ENCODE measurements at regions of chr5 and their contacts with region 1.

Region 1: DNA sequence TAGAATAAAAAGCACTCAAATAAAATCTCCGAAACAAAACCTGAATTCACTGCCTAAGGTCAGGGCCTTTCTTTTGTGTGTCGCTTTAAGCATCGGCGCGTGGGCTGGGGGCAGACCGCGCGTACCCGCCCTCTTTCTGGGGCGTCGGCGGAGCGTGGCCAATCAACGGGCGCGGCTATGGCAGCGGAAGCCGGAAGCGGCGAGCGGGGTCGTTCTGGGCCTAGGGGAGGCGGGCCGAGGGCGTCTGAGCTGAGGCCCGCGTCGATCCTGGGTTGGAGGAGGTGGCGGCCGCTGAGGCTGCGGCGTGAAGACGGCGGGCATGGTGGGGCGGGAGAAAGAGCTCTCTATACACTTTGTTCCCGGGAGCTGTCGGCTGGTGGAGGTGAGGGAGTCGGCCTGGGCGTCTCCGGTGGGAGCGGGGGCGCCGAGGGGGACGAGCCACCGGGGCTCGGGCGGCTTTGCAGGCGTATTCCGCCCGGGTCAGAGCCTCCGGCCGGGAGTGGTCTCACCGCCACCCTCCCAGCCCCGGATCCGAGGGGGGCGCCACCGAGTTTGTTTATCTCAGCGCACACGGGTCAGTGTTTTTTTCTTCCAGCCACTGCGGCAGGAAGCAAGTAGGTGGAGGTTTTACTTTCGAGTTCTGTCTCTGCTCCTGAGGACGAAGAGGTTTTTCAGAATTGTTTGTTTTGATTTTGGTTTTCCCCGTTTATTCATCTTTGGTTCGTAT is at the start of gene MAT2B:
- DNase-seq: peak; percentile 86
- ATAC-seq: peak; percentile 94
- H3K4me3 ChIP-seq: peak within 1 kb of the TSS; percentile 61 to 76
- H3K27ac ChIP-seq: peak within 1 kb of the TSS; percentile 71
- H3K4me1 ChIP-seq: peaks cover 6 to 27% of the 10 kb centered on the region in 2 experiments; a peak in 3 of 4 replicates
- H3K27me3 ChIP-seq: no peaks in the 10 kb centered on the region
- CTCF ChIP-seq: peak in 2 of 3 experiments; percentile 40 to 53; a peak in 3 of 6 replicates
- POLR2A ChIP-seq: peak; percentile 59
- RAD21 ChIP-seq: no peak
- total RNA-seq, gene MAT2B: 45.9 TPM

Region 2: DNA sequence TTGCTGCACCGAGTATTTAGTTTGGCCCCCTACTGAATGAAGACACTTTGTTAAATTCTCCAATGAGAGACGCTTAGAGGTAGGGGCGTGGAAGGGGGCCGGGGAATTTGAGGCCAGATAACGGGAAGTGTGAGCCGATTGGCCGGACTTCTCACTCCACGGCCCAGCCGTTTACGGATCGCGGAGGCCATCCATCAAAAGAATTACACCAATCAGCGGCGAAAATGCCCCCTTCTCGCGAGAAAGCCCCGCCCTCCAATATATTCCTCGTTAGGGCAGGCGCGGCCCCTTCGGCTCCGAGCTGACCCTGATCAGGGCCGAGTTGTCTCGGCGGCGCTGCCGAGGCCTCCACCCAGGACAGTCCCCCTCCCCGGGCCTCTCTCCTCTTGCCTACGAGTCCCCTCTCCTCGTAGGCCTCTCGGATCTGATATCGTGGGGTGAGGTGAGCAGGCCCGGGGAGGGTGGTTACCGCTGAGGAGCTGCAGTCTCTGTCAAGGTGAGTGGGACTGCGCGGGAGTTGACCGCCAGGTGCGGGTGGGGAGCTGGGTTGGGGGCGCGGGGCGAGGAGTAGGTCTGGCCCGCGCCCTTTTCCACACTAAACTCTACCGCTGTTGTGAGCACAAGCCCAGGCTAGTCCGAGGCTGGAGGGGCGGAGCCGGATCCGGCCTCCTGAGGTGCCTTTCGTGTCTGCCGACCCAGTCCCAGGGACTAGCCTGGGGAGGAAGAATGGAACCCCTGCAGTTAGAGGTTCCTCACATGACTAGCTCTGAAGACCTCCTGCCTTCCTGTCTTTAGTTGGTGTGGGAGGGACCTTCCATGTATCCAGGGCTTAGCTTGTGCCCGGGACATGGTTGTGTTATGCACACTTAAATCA is 68.0 kb before region 1 on chr5 and contains the start of gene CCNG1:
- CTCF ChIA-PET with region 1: no interaction called
- POLR2A ChIA-PET with region 1: no interaction called
- RAD21 ChIA-PET with region 1: no interaction called
- intact Hi-C with region 1: loop called (anchors 1 kb)
- DNase-seq: peak; percentile 92
- ATAC-seq: peak; percentile 95
- H3K4me3 ChIP-seq: peak within 1 kb of the TSS; percentile 72 to 87
- H3K27ac ChIP-seq: peak within 1 kb of the TSS; percentile 88
- H3K4me1 ChIP-seq: peaks cover 0 to 14% of the 10 kb centered on the region in 2 experiments; a peak in 3 of 4 replicates
- H3K27me3 ChIP-seq: no peaks in the 10 kb centered on the region
- CTCF ChIP-seq: no peak
- POLR2A ChIP-seq: no peak
- RAD21 ChIP-seq: no peak
- total RNA-seq, gene CCNG1: 176 TPM

Region 3: DNA sequence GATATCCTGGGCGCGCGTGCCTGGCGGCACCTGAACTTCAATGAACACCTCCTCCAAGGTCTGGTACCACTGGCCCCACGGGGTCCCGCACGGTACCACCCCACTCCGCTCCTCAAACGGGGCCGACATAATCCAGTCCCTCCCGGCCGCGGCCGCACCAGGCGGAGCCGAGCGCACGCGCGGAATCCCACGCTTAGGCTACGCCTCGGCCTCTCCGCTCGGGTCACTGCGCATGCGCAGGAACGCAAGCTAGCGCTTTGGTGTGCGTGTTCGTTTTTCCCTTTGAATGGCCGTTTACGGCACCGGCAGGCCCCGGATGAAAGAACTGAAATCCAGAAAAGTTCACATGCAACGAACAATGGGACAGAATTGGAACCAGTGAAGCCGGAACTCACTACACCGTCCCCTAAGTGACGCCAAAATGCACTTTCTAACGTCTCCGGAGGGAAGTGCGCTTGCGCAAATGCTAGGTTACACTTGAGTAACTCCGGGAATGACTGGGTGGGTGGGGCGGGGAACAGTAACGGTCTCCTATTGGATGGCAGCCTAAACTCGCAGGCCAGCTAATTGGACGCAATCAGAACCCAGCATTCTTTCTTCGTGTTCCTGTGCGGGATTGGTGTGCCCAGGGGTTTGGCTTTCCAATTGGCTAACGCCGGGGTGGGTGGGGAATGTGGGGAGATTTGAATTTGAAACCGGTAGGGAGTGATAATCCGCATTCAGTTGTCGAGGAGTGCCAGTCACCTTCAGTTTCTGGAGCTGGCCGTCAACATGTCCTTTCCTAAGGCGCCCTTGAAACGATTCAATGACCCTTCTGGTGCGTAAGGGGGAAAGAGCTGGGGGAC is 45.4 kb before region 1 on chr5 and contains the starts of genes HMMR and NUDCD2:
- CTCF ChIA-PET with region 1: interaction called, 3 read pairs
- POLR2A ChIA-PET with region 1: interaction called, 10 read pairs
- RAD21 ChIA-PET with region 1: no interaction called
- intact Hi-C with region 1: loop called (anchors 2 kb)
- DNase-seq: peak; percentile 97
- ATAC-seq: peak; percentile 89
- H3K4me3 ChIP-seq: peak within 1 kb of the TSS; percentile 79 to 88
- H3K27ac ChIP-seq: peak within 1 kb of the TSS; percentile 87
- H3K4me1 ChIP-seq: peaks cover 7 to 25% of the 10 kb centered on the region in 2 experiments; a peak in 3 of 4 replicates
- H3K27me3 ChIP-seq: no peaks in the 10 kb centered on the region
- CTCF ChIP-seq: no peak
- POLR2A ChIP-seq: peak; percentile 80
- RAD21 ChIP-seq: no peak
- total RNA-seq, gene HMMR: 54.9 TPM
- total RNA-seq, gene NUDCD2: 56.8 TPM

Region 4: GRCh38 chr5:163473635-163474243 is 31.8 kb before region 1 on chr5:
- CTCF ChIA-PET with region 1: no interaction called
- POLR2A ChIA-PET with region 1: interaction called, 3 read pairs
- RAD21 ChIA-PET with region 1: no interaction called
- intact Hi-C with region 1: loop called (anchors 2 kb)
- DNase-seq: no peak
- ATAC-seq: peak; percentile 78
- H3K4me3 ChIP-seq: no peak overlapping the region
- H3K27ac ChIP-seq: no peak overlapping the region
- H3K4me1 ChIP-seq: no peaks in the 10 kb centered on the region
- H3K27me3 ChIP-seq: no peaks in the 10 kb centered on the region
- CTCF ChIP-seq: peak; percentile 10 to 58 (median 16); a peak in 4 of 6 replicates
- POLR2A ChIP-seq: no peak
- RAD21 ChIP-seq: peak; percentile 41

Region 5: GRCh38 chr5:163552536-163552935 is 47.0 kb after region 1 on chr5:
- CTCF ChIA-PET with region 1: no interaction called
- POLR2A ChIA-PET with region 1: no interaction called
- RAD21 ChIA-PET with region 1: no interaction called
- intact Hi-C with region 1: no loop called
- DNase-seq: no peak
- ATAC-seq: no peak
- H3K4me3 ChIP-seq: no peak overlapping the region
- H3K27ac ChIP-seq: no peak overlapping the region
- H3K4me1 ChIP-seq: no peaks in the 10 kb centered on the region
- H3K27me3 ChIP-seq: peaks cover 5% of the 10 kb centered on the region; the same call in 1 of the 2 replicates
- CTCF ChIP-seq: no peak
- POLR2A ChIP-seq: no peak
- RAD21 ChIP-seq: no peak

Measured in HCT116 (cell line).